ENCODE measurements at regions of chr1 and their contacts with region 1.

Region 1: GRCh38 chr1:198651650-198652400 is 13.0 kb downstream of the PTPRC start:
- DNase-seq: peak; percentile 69
- ATAC-seq: peak; percentile 76
- H3K4me3 ChIP-seq: peak overlapping the region in 2 of 5 experiments; percentile 11 to 13
- H3K4me3 Mint-ChIP-seq: peak overlapping the region; percentile 68
- H3K27ac ChIP-seq: peak overlapping the region in 1 of 2 donors; percentile 90
- H3K27ac Mint-ChIP-seq: peak overlapping the region; percentile 73
- H3K4me1 ChIP-seq: peaks cover 50 to 94% of the 10 kb centered on the region in 2 donors
- H3K4me1 Mint-ChIP-seq: peaks cover 69% of the 10 kb centered on the region
- H3K27me3 ChIP-seq: no peaks in the 10 kb centered on the region
- H3K27me3 Mint-ChIP-seq: no peaks in the 10 kb centered on the region
- CTCF ChIP-seq: no peak

Region 2: DNA sequence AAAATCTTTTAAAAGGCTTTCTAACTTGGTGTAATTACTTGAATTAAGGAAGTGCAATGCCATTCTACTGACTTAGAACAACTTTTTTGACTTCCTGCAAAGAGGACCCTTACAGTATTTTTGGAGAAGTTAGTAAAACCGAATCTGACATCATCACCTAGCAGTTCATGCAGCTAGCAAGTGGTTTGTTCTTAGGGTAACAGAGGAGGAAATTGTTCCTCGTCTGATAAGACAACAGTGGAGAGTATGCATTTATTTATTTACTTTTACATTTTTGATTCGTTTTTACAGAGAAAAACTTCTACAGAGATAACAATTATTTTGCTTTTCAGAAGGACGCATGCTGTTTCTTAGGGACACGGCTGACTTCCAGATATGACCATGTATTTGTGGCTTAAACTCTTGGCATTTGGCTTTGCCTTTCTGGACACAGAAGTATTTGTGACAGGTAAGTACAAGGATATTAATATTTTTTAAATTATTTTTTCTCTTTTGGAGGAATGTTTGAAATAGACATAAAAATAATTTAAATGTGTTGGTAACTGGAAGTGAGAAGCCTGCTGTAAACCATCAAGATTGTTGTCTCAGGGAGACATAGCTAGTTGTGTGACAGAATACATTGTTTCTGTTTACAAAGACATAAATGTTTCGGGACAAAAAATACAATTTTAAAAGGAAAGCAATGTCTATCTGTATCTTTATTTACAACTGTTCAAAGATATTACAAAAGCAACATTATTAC is 12.8 kb before region 1 on chr1 and contains the start of gene PTPRC:
- CTCF ChIA-PET with region 1: interaction called, 4 read pairs
- POLR2A ChIA-PET with region 1: interaction called, 10 read pairs
- intact Hi-C with region 1: loop called (anchors 1 kb)
- DNase-seq: peak; percentile 87
- ATAC-seq: peak; percentile 81
- H3K4me3 ChIP-seq: peak within 1 kb of the TSS; percentile 60 to 98 (median 87)
- H3K4me3 Mint-ChIP-seq: peak within 1 kb of the TSS; percentile 89
- H3K27ac ChIP-seq: peak within 1 kb of the TSS; percentile 82 to 94
- H3K27ac Mint-ChIP-seq: peak within 1 kb of the TSS; percentile 94
- H3K4me1 ChIP-seq: peaks cover 49 to 63% of the 10 kb centered on the region in 2 donors
- H3K4me1 Mint-ChIP-seq: peaks cover 65% of the 10 kb centered on the region
- H3K27me3 ChIP-seq: no peaks in the 10 kb centered on the region
- H3K27me3 Mint-ChIP-seq: no peaks in the 10 kb centered on the region
- CTCF ChIP-seq: no peak
- total RNA-seq, gene PTPRC: 543 and 545 TPM in 2 replicates

Region 3: DNA sequence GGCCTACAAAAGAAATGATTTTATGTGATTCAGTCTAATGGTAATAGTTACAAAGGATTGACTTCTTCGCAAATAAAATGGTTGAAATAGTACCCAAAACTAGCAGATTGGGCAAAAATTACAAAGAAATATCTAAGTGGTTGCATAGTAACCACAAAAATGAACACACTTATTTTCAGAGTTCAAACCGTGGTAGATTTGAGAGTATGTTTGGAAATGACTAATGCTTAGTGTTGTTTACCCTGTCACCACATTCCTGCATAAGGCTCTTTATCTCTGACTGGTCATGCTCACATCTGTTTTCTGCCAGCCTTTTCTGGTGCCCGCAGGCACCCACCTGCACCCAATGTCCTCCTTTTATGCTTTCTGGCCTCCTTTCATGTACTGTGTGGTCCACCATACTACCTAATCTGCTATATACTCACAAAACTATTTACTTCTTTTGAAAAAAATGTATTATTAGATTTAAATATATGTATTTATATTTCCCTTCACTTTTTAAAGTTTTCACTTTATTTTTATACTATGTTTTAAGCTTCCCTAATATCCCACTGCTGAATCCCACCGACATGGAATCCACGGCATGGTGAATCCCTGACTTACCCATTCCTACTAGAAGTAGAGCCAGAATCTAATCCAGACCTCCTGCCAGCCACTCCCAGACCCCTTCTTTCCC is 17.3 kb after region 1 on chr1:
- CTCF ChIA-PET with region 1: interaction called, 11 read pairs
- POLR2A ChIA-PET with region 1: interaction called, 3 read pairs
- intact Hi-C with region 1: no loop called
- DNase-seq: no peak
- ATAC-seq: peak; percentile 56
- H3K4me3 ChIP-seq: no peak overlapping the region
- H3K4me3 Mint-ChIP-seq: peak overlapping the region; percentile 64
- H3K27ac ChIP-seq: peak overlapping the region; percentile 42 to 72
- H3K27ac Mint-ChIP-seq: peak overlapping the region; percentile 94
- H3K4me1 ChIP-seq: peaks cover 72 to 88% of the 10 kb centered on the region in 2 donors
- H3K4me1 Mint-ChIP-seq: peaks cover 83% of the 10 kb centered on the region
- H3K27me3 ChIP-seq: no peaks in the 10 kb centered on the region
- H3K27me3 Mint-ChIP-seq: no peaks in the 10 kb centered on the region
- CTCF ChIP-seq: no peak

Region 4: DNA sequence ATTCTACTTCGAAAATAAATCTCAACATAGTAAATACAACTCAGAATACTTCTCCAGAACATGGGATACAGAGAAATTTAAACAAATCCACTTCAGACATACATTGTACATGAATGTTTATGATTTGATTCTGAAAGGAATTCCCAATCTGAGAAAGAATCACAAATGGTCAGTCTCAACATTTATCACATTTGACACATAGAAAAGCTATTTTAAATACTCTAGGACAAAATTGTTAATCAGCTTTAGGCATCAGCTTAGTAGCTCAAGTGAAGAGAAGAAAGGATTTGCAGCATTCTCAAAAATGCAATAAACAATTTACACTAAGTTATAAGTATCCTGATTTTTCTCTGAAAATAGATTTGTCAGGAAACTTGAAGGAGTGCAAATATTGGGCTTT is 171.8 kb after region 1 on chr1:
- CTCF ChIA-PET with region 1: no interaction called
- POLR2A ChIA-PET with region 1: no interaction called
- intact Hi-C with region 1: no loop called
- DNase-seq: no peak
- ATAC-seq: no peak
- H3K4me3 ChIP-seq: no peak overlapping the region
- H3K4me3 Mint-ChIP-seq: no peak overlapping the region
- H3K27ac ChIP-seq: no peak overlapping the region
- H3K27ac Mint-ChIP-seq: no peak overlapping the region
- H3K4me1 ChIP-seq: no peaks in the 10 kb centered on the region
- H3K4me1 Mint-ChIP-seq: no peaks in the 10 kb centered on the region
- H3K27me3 ChIP-seq: no peaks in the 10 kb centered on the region
- H3K27me3 Mint-ChIP-seq: peaks cover 13% of the 10 kb centered on the region
- CTCF ChIP-seq: no peak

Measured in B cell (primary cell).